ENCODE measurements at regions of chr7 and their contacts with region 1.

Region 1: GRCh38 chr7:1601956-1602355 is 32.1 kb upstream of the PSMG3 start:
- DNase-seq: no peak
- H3K4me3 ChIP-seq: no peak overlapping the region
- H3K27ac ChIP-seq: no peak overlapping the region
- H3K4me1 ChIP-seq: no peaks in the 10 kb centered on the region
- H3K27me3 ChIP-seq: peaks cover 0 to 25% of the 10 kb centered on the region in 2 donors
- CTCF ChIP-seq: no peak
- POLR2A ChIP-seq: no peak

Region 2: GRCh38 chr7:1575809-1576208 is 26.1 kb before region 1 on chr7:
- intact Hi-C with region 1: loop called (anchors 2 kb)
- DNase-seq: no peak
- H3K4me3 ChIP-seq: no peak overlapping the region
- H3K27ac ChIP-seq: no peak overlapping the region
- H3K4me1 ChIP-seq: peaks cover 0 to 2% of the 10 kb centered on the region in 2 donors
- H3K27me3 ChIP-seq: no peaks in the 10 kb centered on the region
- CTCF ChIP-seq: no peak
- POLR2A ChIP-seq: no peak